OCI-LY7 (cell line): ENCODE measurements at regions of chr14 and their contacts with region 1.

Region 1: DNA sequence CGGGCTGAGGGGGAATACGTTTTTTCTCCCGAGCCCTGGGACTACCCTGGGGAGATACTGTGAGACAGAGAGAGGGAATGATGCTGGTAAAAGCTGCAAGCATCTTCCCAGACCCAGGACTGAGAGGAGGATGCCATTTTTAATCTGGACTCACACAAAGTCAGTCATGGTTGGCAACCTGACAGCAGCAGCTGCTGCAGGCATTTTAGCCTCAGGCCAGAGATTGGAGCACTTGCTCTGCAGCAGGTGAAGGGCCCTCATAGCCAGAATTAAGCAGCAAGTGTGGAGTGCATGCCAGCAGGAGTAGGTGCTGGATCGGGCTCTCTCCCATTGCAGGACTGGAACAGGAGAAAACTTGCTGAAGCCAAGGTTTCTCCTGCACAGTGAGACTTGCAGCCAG is 361.1 kb upstream of the CLEC14A start:
- DNase-seq: no peak
- H3K4me3 ChIP-seq: no peak overlapping the region
- H3K27ac ChIP-seq: no peak overlapping the region
- H3K4me1 ChIP-seq: no peaks in the 10 kb centered on the region
- CTCF ChIP-seq: no peak

Region 2: DNA sequence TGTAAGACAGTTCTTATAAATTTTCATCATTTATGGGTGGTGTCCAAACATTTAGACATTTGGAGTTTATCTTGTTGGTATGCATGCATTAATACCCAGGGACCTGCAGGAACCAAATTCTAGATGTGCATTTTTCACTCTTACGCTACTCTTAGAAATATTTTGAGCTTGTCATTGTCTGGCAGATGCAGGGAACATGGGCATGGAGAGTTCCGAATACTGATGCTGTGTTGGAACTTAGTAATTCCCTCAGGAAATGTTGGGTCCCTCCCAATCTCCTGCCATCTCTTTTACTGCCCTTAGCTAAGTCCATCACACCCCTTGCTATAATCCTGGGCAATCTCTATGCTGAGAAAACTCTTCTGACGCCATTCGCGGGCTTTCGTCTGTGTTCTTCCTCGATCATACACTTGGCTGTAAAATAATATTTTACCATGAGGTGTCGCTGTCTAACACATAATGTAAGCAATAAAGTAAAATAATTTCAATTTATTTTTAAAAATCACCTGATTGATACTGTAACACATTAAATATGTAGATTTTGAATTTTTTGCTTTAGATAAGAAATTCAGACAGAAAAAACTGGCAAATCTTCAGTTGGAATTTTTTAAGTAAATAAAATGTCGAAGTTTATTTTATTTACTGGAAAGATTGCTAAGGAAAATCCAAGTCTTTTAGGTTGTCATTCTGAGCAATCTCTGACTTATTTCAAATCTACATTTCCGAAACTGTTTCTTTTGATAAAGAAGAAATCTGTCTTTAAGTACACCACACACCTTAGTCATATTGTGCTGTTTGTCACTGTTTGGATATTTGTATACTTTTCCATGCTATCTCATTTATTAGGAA is 713.4 kb before region 1 on chr14:
- CTCF ChIA-PET with region 1: no interaction called
- POLR2A ChIA-PET with region 1: no interaction called
- intact Hi-C with region 1: loop called (anchors 10 kb)
- DNase-seq: peak; percentile 74
- H3K4me3 ChIP-seq: no peak overlapping the region
- H3K27ac ChIP-seq: no peak overlapping the region
- H3K4me1 ChIP-seq: no peaks in the 10 kb centered on the region
- CTCF ChIP-seq: peak; percentile 94